Naive thymus-derived CD4-positive, alpha-beta T cell (primary cell): ENCODE measurements at regions of chr9 and their contacts with region 1.

Region 1: DNA sequence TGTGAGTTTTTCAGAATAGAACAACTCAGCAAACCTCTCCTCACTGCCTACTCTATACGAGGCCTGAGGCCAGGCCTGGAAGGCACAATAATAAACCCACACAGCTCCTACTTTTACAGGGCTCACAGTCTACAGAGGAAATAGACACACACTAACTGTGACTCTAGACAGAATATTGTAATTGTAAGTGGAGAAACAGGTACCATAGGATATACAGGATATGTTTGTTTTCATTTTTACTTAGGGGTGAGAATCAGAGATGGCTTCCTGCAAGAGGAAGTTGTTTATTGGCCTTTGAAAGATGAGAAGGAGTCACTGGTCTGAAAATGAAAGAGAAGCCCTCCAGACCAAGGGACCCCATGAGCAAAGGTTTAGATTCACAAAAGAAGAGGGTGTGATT is 35.8 kb upstream of the TGFBR1 start:
- DNase-seq: no peak
- ATAC-seq: no peak
- H3K4me3 ChIP-seq: no peak overlapping the region
- H3K4me3 Mint-ChIP-seq: peak overlapping the region in 8 of 10 donors; percentile 34 to 59 (median 48)
- H3K27ac ChIP-seq: no peak overlapping the region
- H3K27ac Mint-ChIP-seq: peak overlapping the region; percentile 53 to 91 (median 82)
- H3K4me1 ChIP-seq: peaks cover 13 to 27% of the 10 kb centered on the region in 2 donors
- H3K4me1 Mint-ChIP-seq: peaks cover 23 to 83% (median 65%) of the 10 kb centered on the region in 7 donors
- H3K27me3 ChIP-seq: no peaks in the 10 kb centered on the region
- H3K27me3 Mint-ChIP-seq: no peaks in the 10 kb centered on the region

Region 2: GRCh38 chr9:99085949-99086948 is 17.2 kb after region 1 on chr9:
- CTCF ChIA-PET with region 1: interaction called, 4 read pairs
- POLR2A ChIA-PET with region 1: interaction called, 3 read pairs
- intact Hi-C with region 1: loop called in 1 of 2 experiments (anchors 2 kb)
- DNase-seq: no peak
- ATAC-seq: peak; percentile 78
- H3K4me3 ChIP-seq: no peak overlapping the region
- H3K4me3 Mint-ChIP-seq: no peak overlapping the region
- H3K27ac ChIP-seq: no peak overlapping the region
- H3K27ac Mint-ChIP-seq: peak overlapping the region in 1 of 9 donors; percentile 22
- H3K4me1 ChIP-seq: peaks cover 0 to 8% of the 10 kb centered on the region in 2 donors
- H3K4me1 Mint-ChIP-seq: peaks cover 9 to 41% (median 15%) of the 10 kb centered on the region in 7 donors
- H3K27me3 ChIP-seq: no peaks in the 10 kb centered on the region
- H3K27me3 Mint-ChIP-seq: peaks cover 0 to 11% (median 0%) of the 10 kb centered on the region in 5 donors